Activated B cell treated with CpG ODN at 0.5 μM for 24 hours (primary cell): ENCODE measurements at regions of chr2 and their contacts with region 1.

Region 1: GRCh38 chr2:219388127-219388844 is 574 bp upstream of the DNPEP start:
- DNase-seq: peak; percentile 99
- ATAC-seq: peak; percentile 79
- H3K4me3 Mint-ChIP-seq: peak overlapping the region; percentile 71
- H3K27ac Mint-ChIP-seq: peak overlapping the region; percentile 84
- H3K4me1 Mint-ChIP-seq: peaks cover 16% of the 10 kb centered on the region
- H3K27me3 Mint-ChIP-seq: peaks cover 4% of the 10 kb centered on the region
- CTCF ChIP-seq: no peak

Region 2: DNA sequence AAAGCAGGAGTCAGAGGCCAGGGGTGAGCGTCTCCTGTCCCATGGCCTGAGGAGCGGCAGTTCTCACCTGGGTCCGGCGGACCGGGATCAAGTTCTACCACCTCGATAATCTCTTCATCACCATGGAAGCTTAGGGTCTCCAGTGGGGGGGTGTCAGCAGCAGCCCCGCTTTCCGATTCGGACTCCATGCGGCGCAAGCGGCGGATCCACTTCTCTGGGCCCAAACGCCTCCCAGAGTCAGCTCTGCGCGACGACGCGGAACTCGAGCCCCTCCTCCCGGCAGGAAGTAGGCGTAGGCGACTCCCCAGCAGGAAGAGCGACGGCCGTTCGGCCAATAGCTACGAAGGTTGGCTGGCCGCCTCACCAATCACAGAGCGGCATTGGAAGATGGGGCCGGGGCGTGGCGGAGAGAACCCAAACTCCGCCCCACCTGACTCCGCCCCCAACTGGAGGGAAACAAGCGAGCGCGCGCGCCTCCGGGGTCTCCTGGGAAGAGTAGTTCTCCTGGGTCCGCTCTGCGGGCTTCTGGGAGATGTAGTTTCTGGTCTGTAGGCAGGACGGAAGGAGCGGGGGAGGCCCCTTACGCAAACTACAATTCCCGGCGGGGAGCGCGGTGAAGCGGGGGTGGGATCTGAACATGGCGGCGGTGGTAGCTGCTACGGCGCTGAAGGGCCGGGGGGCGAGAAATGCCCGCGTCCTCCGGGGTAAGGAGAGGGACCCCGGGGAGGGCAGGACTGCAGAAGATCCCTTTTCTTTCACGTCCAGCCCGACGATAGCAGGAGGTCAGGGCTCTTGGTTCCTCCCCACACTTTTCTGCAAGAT is 1118.2 kb before region 1 on chr2 and contains the starts of genes AAMP and PNKD:
- CTCF ChIA-PET with region 1: no interaction called
- POLR2A ChIA-PET with region 1: no interaction called
- intact Hi-C with region 1: loop called (anchors 1 kb)
- DNase-seq: peak; percentile 100
- ATAC-seq: peak; percentile 83
- H3K4me3 Mint-ChIP-seq: peak within 1 kb of the TSS; percentile 93
- H3K27ac Mint-ChIP-seq: peak within 1 kb of the TSS; percentile 88
- H3K4me1 Mint-ChIP-seq: peaks cover 67% of the 10 kb centered on the region
- H3K27me3 Mint-ChIP-seq: no peaks in the 10 kb centered on the region
- CTCF ChIP-seq: no peak
- total RNA-seq, gene AAMP: 63.4 and 63.6 TPM in 2 replicates
- total RNA-seq, gene PNKD: 21.0 and 23.7 TPM in 2 replicates

Region 3: DNA sequence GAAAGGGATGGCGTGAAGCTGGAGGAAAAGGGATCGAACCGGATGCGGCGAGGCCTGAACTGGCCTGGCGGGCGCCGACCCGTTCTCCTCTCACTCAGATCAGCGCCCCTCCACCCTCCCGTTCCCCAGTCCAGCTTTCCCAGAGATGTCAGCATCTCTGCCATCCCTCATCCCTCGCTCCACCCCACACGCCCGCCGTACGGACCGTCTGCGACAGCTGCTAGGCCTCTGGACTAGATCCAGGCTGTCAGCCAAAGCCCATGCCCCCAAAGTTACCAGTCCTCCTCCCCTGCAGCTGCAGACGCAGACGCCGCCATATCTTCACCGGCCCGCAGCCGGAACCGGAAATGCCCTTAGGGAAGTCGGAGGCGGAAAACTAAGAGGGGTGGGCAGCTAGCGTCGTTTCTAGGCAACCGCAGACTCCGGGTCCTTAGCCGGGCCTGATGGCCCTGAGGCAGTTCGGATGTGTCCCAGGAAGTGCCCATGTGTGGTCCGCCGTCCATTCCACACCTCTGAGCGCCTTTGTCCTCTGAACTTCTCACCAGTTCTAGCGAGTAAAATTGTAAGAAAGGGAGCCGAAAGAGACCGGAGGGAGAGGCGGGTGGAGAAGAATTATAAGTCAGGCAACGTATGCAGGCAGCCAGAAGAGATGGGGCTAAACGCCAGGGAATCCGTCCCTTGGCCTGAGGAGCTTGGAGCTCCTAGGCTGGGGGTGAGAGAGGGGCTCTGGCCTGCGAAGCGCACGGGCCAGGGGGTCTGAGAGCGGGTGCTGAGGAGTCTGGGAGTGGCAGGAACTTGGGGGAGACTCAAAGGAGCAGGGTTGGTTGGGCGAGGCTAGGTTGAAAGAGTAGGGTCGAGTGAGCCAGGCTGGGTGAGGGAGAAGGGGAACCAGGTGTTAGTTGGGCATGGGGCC is 716.4 kb before region 1 on chr2 and contains the starts of genes RNF25 and STK36:
- CTCF ChIA-PET with region 1: no interaction called
- POLR2A ChIA-PET with region 1: interaction called, 4 read pairs
- intact Hi-C with region 1: loop called (anchors 5 kb)
- DNase-seq: peak; percentile 66
- ATAC-seq: peak; percentile 95
- H3K4me3 Mint-ChIP-seq: peak within 1 kb of the TSS; percentile 99
- H3K27ac Mint-ChIP-seq: peak within 1 kb of the TSS; percentile 97
- H3K4me1 Mint-ChIP-seq: peaks cover 21% of the 10 kb centered on the region
- H3K27me3 Mint-ChIP-seq: no peaks in the 10 kb centered on the region
- CTCF ChIP-seq: no peak
- total RNA-seq, gene RNF25: 29.7 and 35.1 TPM in 2 replicates
- total RNA-seq, gene STK36: 24.2 and 29.2 TPM in 2 replicates

Region 4: DNA sequence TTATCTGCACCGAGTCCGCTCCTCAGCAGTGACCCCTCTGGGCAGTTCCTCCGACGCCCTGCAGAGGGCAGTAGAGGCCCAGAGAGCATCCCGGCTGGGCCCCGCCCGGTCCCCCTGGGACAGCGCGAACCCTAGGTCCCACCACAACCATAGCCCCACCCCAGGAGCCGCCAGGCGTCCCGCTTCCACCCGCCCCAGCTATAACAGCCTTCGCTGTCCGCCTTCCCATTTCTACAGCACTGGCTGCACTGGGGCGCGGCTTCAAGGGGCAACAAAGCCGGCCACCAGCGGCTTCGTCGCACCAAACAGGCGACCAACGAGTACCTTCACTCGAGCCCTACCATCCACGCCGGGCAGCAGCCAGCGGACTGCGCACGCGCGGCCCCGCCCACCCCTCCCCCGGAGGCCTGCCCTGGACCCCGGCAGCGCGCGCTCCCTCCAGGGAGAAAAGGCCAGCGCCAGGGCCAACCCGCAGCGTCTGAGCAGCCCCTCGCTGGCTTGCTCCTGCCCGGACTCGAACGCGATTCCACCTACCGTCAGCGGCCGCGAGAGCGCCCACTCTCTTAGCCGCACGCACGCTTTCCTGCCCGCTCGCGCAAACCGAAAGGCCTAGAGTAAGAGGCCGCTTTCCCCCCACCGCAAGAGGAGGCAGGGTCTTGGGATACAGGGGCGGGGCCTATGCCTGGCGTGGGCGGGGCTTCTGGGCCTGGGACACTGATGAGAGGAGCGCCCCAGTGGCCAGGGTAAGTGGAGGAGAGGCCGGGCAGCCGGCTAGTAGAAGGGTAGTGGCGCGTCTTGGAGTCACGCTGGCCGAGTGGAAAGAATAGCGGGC is 227.9 kb before region 1 on chr2 and contains the start of gene NHEJ1:
- CTCF ChIA-PET with region 1: interaction called, 4 read pairs
- POLR2A ChIA-PET with region 1: interaction called, 6 read pairs
- intact Hi-C with region 1: loop called (anchors 1 kb)
- DNase-seq: peak; percentile 96
- ATAC-seq: peak; percentile 87
- H3K4me3 Mint-ChIP-seq: peak within 1 kb of the TSS; percentile 96
- H3K27ac Mint-ChIP-seq: peak within 1 kb of the TSS; percentile 98
- H3K4me1 Mint-ChIP-seq: peaks cover 16% of the 10 kb centered on the region
- H3K27me3 Mint-ChIP-seq: no peaks in the 10 kb centered on the region
- CTCF ChIP-seq: peak; percentile 42
- total RNA-seq, gene NHEJ1: 19.1 and 25.0 TPM in 2 replicates

Region 5: DNA sequence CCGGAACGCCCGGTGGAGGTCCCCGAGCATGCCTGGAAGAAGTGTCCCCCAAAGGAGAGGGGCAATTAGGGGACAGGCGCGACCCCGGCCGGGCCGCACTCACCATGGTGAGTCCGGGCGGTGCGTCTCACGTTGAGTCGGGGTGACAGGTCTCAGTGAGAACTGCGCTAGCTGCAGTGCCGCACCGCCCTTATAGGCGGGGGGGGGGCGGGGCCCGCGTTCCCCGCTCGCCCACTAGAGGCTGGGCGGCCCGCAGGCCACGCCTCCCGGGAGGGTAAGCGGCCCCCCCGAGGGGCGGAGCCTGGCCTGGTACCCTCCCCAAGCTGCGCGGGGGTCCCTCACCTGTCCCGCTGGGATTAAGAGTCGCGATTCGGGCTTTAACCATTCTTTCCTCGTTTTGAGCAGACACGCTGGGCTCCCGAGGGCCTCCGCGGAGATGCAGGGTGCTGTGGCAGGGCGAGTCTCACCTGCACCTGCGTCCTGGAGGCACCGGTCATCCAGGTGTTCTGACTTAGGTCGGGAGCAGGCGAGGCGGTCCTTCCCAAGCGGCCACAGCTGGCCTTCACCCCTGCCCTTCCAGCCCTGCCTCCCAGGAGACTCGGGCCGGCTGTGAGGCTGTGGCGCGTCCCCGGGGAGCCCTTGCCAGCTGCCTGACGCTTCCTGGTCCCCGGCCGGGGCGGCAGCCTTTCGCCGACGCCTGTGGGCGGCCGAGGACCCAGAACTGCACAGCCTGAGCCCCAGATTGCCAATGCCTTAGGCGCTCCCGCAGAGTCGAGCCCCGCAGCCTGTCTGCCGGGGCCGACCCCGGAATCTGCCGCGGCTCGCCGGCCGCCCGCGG is 134.3 kb before region 1 on chr2 and contains the start of gene TUBA4A:
- CTCF ChIA-PET with region 1: interaction called, 3 read pairs
- POLR2A ChIA-PET with region 1: interaction called, 19 read pairs
- intact Hi-C with region 1: loop called (anchors 1 kb)
- DNase-seq: peak; percentile 90
- ATAC-seq: peak; percentile 69
- H3K4me3 Mint-ChIP-seq: peak within 1 kb of the TSS; percentile 82
- H3K27ac Mint-ChIP-seq: peak within 1 kb of the TSS; percentile 98
- H3K4me1 Mint-ChIP-seq: peaks cover 53% of the 10 kb centered on the region
- H3K27me3 Mint-ChIP-seq: no peaks in the 10 kb centered on the region
- CTCF ChIP-seq: no peak
- total RNA-seq, gene TUBA4A: 184 and 192 TPM in 2 replicates

Region 6: GRCh38 chr2:219430633-219431615 is 42.6 kb after region 1 on chr2:
- CTCF ChIA-PET with region 1: no interaction called
- POLR2A ChIA-PET with region 1: no interaction called
- intact Hi-C with region 1: no loop called
- DNase-seq: no peak
- ATAC-seq: peak; percentile 37
- H3K4me3 Mint-ChIP-seq: no peak overlapping the region
- H3K27ac Mint-ChIP-seq: no peak overlapping the region
- H3K4me1 Mint-ChIP-seq: no peaks in the 10 kb centered on the region
- H3K27me3 Mint-ChIP-seq: peaks cover 27% of the 10 kb centered on the region
- CTCF ChIP-seq: no peak

Region 7: DNA sequence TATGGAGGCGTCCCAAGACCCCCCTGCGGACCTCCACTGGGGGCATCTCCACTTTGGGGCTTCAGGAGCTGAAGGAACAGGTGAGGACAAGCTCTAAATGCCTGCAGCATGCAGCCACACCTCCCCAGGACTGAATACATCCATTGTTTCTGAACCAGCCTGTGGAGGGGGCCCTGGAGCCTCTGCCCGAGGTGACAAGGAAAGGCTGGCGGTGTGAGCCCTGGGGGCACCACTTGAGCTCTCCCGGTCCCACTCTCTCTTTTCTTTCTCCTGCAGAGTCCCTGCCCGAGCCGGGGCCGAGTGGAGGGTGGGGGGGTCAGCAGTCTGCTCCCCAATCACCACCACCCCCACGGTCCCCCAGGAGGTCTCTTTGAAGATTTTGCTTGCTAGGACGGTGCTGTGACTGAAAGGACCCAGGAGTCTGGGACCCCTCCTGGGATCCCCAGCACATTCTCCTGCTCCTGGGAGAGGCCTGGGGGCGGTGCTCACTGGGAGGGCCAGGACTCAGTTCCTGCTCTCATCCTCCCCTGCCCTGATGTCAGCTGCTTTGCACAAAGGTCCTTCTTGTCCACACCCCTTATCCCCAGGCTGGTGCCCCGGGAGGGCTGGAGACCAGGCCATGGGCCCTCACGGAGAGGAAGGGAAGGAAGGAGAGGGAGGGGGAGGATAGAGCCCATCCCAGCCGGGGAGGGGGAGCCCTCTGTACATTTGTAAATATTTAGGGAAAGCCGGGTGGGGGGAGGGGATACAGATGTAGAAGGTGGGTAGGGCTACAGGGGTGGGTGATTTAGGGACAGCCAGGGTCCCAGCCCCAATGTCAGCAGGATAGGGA is 149.6 kb after region 1 on chr2:
- CTCF ChIA-PET with region 1: no interaction called
- POLR2A ChIA-PET with region 1: interaction called, 10 read pairs
- intact Hi-C with region 1: loop called (anchors 1 kb)
- DNase-seq: no peak
- ATAC-seq: no peak
- H3K4me3 Mint-ChIP-seq: no peak overlapping the region
- H3K27ac Mint-ChIP-seq: no peak overlapping the region
- H3K4me1 Mint-ChIP-seq: peaks cover 13% of the 10 kb centered on the region
- H3K27me3 Mint-ChIP-seq: peaks cover 27% of the 10 kb centered on the region
- CTCF ChIP-seq: no peak

Region 8: DNA sequence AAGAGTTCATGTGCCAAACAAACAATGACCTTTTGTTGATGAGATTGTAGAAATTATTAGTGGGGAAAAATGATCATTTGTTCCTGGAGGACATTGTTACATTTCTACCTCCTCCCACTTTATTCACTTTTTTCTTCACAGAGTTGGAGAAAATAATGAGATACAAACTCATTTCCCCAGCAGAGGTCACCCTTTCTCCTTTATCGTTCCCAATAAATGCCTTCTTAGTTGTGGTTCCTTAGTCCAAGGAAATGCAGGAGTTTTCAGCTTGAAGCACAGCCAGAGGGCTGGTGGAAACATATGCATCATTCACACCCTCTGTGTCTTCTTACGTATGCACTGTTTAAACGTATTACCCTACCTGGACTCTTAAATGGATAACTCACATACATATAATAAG is 347.9 kb after region 1 on chr2:
- CTCF ChIA-PET with region 1: no interaction called
- POLR2A ChIA-PET with region 1: no interaction called
- intact Hi-C with region 1: no loop called
- DNase-seq: no peak
- ATAC-seq: no peak
- H3K4me3 Mint-ChIP-seq: no peak overlapping the region
- H3K27ac Mint-ChIP-seq: no peak overlapping the region
- H3K4me1 Mint-ChIP-seq: no peaks in the 10 kb centered on the region
- H3K27me3 Mint-ChIP-seq: peaks cover 11% of the 10 kb centered on the region
- CTCF ChIP-seq: no peak